Dorsolateral prefrontal cortex (tissue), 120 donors: ENCODE measurements at regions of chr7 and their contacts with region 1.

Region 1: DNA sequence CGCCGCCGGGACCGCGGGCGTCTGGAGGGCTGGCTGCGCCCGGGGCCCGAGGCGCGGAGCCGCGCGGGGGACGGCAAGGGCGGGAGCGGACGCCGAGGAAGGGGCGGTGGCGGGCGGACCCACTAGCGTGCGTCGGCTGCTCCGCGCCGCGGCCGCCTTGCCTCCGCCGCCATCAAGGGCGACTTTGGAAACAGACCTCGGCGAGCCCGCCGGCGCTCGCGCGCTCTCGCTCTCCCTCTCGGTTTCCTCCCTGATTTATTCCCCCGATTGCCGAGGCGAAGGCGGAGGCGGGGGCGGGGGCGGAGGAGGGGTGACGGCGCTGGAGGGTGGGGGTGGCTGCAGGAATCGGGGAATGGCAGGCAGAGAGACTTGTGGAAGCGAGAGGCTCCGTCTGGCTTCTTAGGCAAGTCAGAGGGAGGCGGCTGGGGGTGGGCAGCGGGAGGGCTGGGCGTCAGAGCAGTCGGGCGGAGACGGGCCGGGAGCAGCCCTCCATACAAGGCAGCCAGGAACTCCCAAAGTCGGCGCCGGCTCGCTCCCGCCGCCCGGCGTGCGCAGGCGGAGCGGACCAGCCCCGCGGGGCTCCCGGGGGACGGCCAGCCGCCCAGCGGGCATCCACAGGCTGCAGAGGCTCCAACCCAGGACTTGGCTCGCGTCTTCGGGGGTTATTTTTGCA is at the start of gene CACNA2D1:
- DNase-seq: peak; percentile 59 to 90 (median 78)
- H3K4me3 ChIP-seq: peak within 1 kb of the TSS; percentile 52 to 89 (median 76)
- H3K27ac ChIP-seq: peak within 1 kb of the TSS; percentile 68 to 98 (median 93)
- H3K27me3 ChIP-seq: no peaks in the 10 kb centered on the region
- CTCF ChIP-seq: peak in 42 of 56 donors; percentile 18 to 58 (median 36)
- total RNA-seq, gene CACNA2D1: 33.1 to 150 (median 86.7) TPM

Region 2: DNA sequence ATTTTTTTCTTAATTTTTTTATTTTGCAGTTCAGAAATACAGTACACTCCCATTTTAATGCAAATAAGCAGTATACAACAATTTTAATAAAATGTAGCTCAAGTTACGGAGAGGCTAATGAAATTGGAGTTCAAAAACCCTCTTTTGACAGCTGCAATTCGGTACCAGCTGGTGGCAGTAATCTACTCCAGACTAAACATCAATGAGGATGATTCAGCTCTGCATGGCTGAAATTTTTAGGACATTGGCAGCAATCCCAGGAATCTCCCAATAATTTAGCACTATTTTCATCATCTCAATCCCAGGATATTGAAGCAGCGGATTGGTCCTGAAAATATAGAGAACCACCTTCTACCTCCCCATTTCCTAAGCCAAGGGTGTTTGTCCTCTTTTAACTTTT is 278.9 kb before region 1 on chr7:
- intact Hi-C with region 1: loop called (anchors 5 to 10 kb)
- DNase-seq: peak in 2 of 10 donors; percentile 34 to 48
- H3K4me3 ChIP-seq: peak overlapping the region in 25 of 59 donors; percentile 0 to 43 (median 20)
- H3K27ac ChIP-seq: peak overlapping the region in 57 of 59 donors; percentile 39 to 94 (median 86)
- H3K27me3 ChIP-seq: no peaks in the 10 kb centered on the region
- CTCF ChIP-seq: peak; percentile 18 to 79 (median 60)

Region 3: DNA sequence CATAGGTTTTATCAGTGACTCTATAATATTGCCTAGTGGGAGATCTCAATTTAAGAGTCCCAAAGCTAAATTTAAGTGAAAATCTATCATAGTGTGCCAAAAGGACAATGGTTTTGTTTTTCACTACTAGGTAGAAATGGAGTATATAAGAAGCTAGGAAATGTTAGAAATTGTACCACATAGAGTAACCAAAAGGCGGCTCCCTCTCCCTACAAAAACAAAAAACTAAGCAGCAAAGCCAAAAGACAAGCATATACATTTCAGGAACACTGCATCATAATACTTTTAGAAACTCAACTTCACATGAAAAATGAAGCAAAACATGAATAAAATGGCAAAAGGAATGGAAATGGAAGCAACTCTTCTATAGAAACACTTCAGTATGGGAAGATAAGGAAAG is 271.7 kb before region 1 on chr7:
- intact Hi-C with region 1: loop called (anchors 5 to 10 kb)
- DNase-seq: no peak
- H3K4me3 ChIP-seq: no peak overlapping the region
- H3K27ac ChIP-seq: peak overlapping the region in 5 of 59 donors; percentile 12 to 65 (median 16)
- H3K27me3 ChIP-seq: no peaks in the 10 kb centered on the region
- CTCF ChIP-seq: peak in 21 of 56 donors; percentile 9 to 41 (median 20)

Region 4: DNA sequence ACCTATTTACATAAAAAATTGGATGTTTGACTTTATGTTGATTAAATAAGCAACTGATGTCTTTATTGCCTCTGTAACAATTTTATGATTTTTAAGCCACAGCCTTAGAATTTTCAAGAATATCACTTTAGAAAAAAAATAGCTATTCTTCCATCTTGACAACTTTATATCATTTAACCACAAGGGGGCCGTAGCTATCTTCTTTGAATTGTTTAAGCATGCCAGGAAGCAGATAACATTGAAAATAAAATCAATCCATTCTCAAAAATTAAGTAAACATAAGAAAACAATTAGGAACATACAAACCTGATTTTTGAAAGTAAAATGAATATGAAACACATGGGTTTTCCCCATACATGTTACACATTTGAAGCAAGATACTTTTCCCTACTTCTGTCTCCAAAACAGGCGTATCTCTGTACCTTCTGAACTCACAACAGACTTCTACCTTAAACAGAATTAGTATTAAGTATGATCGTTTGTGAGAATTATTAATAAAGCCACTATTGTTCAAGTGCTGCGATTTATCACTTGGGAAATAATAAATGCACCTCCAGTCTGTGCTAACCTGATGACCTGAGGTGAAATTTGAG is 209.1 kb before region 1 on chr7:
- intact Hi-C with region 1: loop called (anchors 5 kb)
- DNase-seq: no peak
- H3K4me3 ChIP-seq: no peak overlapping the region
- H3K27ac ChIP-seq: peak overlapping the region in 1 of 59 donors; percentile 23
- H3K27me3 ChIP-seq: no peaks in the 10 kb centered on the region
- CTCF ChIP-seq: peak; percentile 56 to 92 (median 74)

Region 5: DNA sequence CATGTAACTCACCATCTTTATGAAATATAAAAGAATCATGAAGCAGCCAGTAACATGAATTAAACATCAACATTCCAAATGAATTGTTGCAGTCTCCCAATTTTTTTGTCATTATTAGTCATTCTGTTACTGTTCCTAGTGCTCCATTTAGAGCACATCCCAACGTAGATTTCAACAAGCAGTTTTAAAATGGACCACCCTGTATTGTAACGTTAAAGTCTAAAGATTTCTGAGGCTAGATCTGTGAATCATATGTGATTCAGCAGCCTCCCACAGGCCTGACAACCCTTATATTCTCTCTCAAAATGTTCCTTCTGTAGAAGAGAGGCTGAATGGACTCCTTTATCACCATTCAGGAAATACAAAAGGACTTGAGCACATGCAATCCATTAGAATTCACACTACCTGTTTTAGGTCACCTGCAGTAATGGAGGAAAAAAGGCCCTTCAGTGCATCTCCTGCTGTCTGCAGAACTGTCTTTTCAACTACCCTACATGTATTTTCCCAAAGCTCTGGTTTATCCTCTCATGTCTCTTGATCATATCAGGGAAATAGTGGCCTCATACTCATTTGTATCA is 81.5 kb before region 1 on chr7:
- intact Hi-C with region 1: loop called (anchors 5 to 10 kb)
- DNase-seq: no peak
- H3K4me3 ChIP-seq: no peak overlapping the region
- H3K27ac ChIP-seq: peak overlapping the region in 45 of 59 donors; percentile 0 to 75 (median 38)
- H3K27me3 ChIP-seq: no peaks in the 10 kb centered on the region
- CTCF ChIP-seq: no peak

Region 6: DNA sequence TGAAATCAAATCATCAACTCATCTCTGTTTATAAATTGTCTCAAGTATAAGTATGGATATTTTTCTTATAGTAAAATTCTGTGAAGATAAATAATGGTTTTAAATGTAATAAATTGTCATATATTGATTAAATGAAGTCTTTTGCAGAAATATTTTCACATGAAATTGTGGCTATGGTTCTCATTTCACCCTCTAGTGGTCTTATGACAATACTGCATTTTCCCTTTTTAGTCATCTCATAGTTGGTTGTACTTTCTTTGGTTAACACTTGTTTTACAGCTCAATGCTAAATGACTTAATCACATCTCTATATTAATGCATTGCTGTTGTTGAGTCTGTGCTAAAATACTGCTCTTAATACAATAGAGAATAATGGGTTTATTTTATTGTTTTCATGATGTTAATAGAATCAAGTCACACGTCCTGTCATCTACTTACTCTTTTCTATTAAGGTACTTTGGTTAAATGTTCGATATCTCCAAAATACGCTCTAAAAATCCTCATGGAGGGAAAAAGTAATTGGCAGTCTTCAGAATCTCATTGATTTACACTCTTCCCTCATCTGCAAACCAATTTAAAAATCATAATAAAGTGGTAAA is 37.9 kb after region 1 on chr7:
- intact Hi-C with region 1: loop called in 1 of 2 experiments (anchors 5 kb)
- DNase-seq: no peak
- H3K4me3 ChIP-seq: no peak overlapping the region
- H3K27ac ChIP-seq: no peak overlapping the region
- H3K27me3 ChIP-seq: no peaks in the 10 kb centered on the region
- CTCF ChIP-seq: peak; percentile 72 to 97 (median 84)

Region 7: DNA sequence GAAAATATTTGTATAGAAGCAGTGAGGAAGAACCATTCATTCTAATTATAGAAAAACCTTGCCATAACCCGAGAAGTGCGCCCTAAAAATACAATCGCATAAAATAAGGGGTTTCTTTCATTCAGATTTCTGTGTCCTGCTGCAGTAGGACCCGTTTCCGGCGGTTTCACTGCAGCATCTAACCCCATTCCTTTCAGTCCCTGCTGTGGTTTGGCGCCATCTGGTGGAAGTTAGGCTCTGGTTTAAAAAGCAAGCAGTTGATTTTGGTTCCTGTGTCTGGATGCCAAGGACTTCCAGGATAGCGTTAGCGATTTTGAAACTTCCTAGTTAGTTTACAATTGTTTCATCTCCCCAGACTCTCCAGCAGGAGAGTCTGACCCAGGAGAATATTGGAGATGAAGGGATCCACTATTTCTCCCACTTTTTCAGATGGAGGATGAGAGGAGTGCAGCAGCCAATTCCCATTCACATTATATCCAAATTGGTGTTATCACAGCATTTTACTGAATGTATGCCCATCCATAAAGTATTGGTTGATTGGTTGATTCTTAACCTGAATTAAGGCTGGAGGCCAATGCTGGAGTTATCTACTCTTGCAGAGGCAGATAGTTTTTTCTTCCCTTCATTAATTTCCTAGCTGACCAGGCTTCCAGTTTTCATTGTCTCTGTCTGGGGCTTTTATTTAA is 128.7 kb after region 1 on chr7:
- intact Hi-C with region 1: loop called in 1 of 2 experiments (anchors 10 kb)
- DNase-seq: peak; percentile 68 to 92 (median 86)
- H3K4me3 ChIP-seq: peak overlapping the region in 43 of 59 donors; percentile 2 to 50 (median 30)
- H3K27ac ChIP-seq: peak overlapping the region in 7 of 59 donors; percentile 5 to 70 (median 32)
- H3K27me3 ChIP-seq: no peaks in the 10 kb centered on the region
- CTCF ChIP-seq: peak; percentile 85 to 100 (median 94)

Region 8: DNA sequence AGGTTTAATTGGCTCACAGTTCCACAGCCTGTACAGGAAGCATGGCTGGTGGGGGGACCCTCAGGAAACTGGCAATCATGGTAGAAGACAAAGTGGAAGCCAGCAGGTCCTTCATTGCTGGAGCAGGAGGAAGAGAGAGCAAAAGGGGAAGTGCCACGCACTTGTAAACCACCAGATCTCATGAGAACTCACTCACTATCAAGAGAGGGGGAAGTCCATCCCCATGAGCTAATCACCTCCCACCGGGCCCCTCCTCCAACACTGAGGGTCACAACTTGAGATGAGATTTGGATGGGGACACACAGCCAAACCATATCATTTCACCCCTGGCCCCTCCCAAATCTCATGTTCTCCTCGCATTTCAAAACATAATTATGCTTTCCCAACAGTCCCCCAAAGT is 171.8 kb after region 1 on chr7:
- intact Hi-C with region 1: no loop called
- DNase-seq: no peak
- H3K4me3 ChIP-seq: no peak overlapping the region
- H3K27ac ChIP-seq: no peak overlapping the region
- H3K27me3 ChIP-seq: no peaks in the 10 kb centered on the region
- CTCF ChIP-seq: no peak